IMR-90 (cell line): ENCODE measurements at regions of chr11 and their contacts with region 1.

Region 1: GRCh38 chr11:83071567-83072349 is at the start of gene RAB30:
- DNase-seq: peak; percentile 100
- ATAC-seq: peak; percentile 96
- H3K4me3 ChIP-seq: peak within 1 kb of the TSS; percentile 64
- H3K27ac ChIP-seq: peak within 1 kb of the TSS; percentile 93
- H3K4me1 ChIP-seq: peaks cover 7% of the 10 kb centered on the region
- H3K27me3 ChIP-seq: no peaks in the 10 kb centered on the region
- CTCF ChIP-seq: no peak
- POLR2A ChIP-seq: peak; percentile 95
- RAD21 ChIP-seq: peak; percentile 49
- total RNA-seq, gene RAB30: 14.4 and 25.6 TPM in 2 replicates

Region 2: DNA sequence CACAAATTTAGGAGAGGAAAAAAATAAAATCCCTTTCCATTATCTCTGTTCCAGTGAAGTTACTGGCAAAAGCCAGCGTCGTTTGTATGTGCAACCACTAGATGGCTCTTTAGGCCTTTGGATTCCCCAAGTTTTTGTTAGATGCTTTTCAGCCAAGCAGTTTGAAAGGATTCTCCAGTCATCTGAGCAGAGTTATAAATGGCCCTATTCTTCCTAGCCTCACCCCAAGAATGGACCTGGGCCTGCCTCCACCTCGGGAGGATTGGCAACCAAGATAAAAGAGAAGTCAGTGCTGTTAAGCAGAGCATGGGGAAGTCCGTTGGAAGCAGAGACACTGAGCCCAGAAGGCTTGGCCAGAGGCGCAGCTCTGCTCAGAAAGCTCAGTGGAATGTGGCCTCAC is 353.5 kb before region 1 on chr11:
- CTCF ChIA-PET with region 1: no interaction called
- POLR2A ChIA-PET with region 1: no interaction called
- dilution Hi-C with region 1: no loop called
- in situ Hi-C with region 1: no loop called
- intact Hi-C with region 1: loop called (anchors 10 kb)
- DNase-seq: peak; percentile 49
- ATAC-seq: peak; percentile 93
- H3K4me3 ChIP-seq: no peak overlapping the region
- H3K27ac ChIP-seq: no peak overlapping the region
- H3K4me1 ChIP-seq: no peaks in the 10 kb centered on the region
- H3K27me3 ChIP-seq: peaks cover 9% of the 10 kb centered on the region
- CTCF ChIP-seq: peak; percentile 72
- POLR2A ChIP-seq: no peak
- RAD21 ChIP-seq: peak; percentile 69

Region 3: DNA sequence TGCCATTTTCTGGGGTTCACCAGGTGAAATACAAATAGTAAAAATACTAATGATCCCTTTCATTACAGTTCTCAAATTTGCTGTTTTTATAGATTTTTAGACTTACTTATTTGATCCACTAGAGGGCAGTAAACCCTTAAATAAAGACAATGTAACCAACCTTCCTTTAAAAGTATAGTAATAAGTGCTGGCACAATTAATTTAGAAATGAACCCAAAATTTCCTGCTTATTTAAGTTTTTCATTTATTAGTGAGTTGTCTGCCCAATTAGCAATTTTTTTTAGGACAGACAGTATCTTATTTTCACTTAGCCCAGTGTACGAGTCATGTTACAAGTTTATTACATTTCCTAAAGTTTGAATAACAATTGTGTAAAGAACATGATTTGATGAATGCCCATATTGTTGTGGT is 165.5 kb before region 1 on chr11:
- CTCF ChIA-PET with region 1: interaction called, 3 read pairs
- POLR2A ChIA-PET with region 1: no interaction called
- dilution Hi-C with region 1: no loop called
- in situ Hi-C with region 1: loop called (anchors 10 kb)
- intact Hi-C with region 1: loop called (anchors 1 kb)
- DNase-seq: peak; percentile 43
- ATAC-seq: no peak
- H3K4me3 ChIP-seq: no peak overlapping the region
- H3K27ac ChIP-seq: no peak overlapping the region
- H3K4me1 ChIP-seq: no peaks in the 10 kb centered on the region
- H3K27me3 ChIP-seq: no peaks in the 10 kb centered on the region
- CTCF ChIP-seq: peak; percentile 59
- POLR2A ChIP-seq: no peak
- RAD21 ChIP-seq: peak; percentile 68

Region 4: DNA sequence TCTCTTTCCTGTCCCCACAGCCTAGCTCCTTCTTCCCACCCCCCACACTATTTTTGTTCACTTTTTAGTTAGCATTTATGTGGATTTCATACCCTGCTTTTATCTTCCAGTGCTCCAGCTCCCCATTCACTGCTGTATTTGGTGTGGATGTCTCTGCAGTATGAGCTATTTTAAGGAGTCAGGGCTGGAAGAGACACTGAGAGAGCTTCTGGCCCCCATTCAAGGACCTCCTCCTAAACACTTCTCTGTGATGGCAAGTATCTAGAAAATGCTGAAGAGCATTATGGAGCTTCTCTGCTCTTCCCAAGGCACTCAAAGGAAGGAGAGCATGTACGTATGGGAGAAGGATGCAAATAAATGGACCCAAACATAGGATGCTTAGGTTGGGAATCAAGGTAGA is 79.5 kb before region 1 on chr11:
- CTCF ChIA-PET with region 1: no interaction called
- POLR2A ChIA-PET with region 1: no interaction called
- dilution Hi-C with region 1: no loop called
- in situ Hi-C with region 1: no loop called
- intact Hi-C with region 1: no loop called
- DNase-seq: no peak
- ATAC-seq: peak; percentile 21; the same call in 1 of the 2 replicates
- H3K4me3 ChIP-seq: no peak overlapping the region
- H3K27ac ChIP-seq: no peak overlapping the region
- H3K4me1 ChIP-seq: peaks cover 2% of the 10 kb centered on the region
- H3K27me3 ChIP-seq: no peaks in the 10 kb centered on the region
- CTCF ChIP-seq: no peak
- POLR2A ChIP-seq: no peak
- RAD21 ChIP-seq: no peak

Region 5: GRCh38 chr11:83011333-83012167 is 60.2 kb before region 1 on chr11:
- CTCF ChIA-PET with region 1: no interaction called
- POLR2A ChIA-PET with region 1: no interaction called
- dilution Hi-C with region 1: no loop called
- in situ Hi-C with region 1: no loop called
- intact Hi-C with region 1: loop called (anchors 5 kb)
- DNase-seq: no peak
- ATAC-seq: no peak
- H3K4me3 ChIP-seq: no peak overlapping the region
- H3K27ac ChIP-seq: no peak overlapping the region
- H3K4me1 ChIP-seq: peaks cover 22% of the 10 kb centered on the region
- H3K27me3 ChIP-seq: no peaks in the 10 kb centered on the region
- CTCF ChIP-seq: no peak
- POLR2A ChIP-seq: no peak
- RAD21 ChIP-seq: no peak

Region 6: GRCh38 chr11:83156150-83156995 is 84.6 kb after region 1 on chr11:
- CTCF ChIA-PET with region 1: no interaction called
- POLR2A ChIA-PET with region 1: no interaction called
- dilution Hi-C with region 1: loop called (anchors 25 kb)
- in situ Hi-C with region 1: no loop called
- intact Hi-C with region 1: loop called (anchors 1 kb)
- DNase-seq: peak; percentile 100
- ATAC-seq: peak; percentile 92
- H3K4me3 ChIP-seq: peak overlapping the region; percentile 58
- H3K27ac ChIP-seq: peak overlapping the region; percentile 60
- H3K4me1 ChIP-seq: peaks cover 3% of the 10 kb centered on the region
- H3K27me3 ChIP-seq: no peaks in the 10 kb centered on the region
- CTCF ChIP-seq: no peak
- POLR2A ChIP-seq: no peak
- RAD21 ChIP-seq: no peak

Region 7: DNA sequence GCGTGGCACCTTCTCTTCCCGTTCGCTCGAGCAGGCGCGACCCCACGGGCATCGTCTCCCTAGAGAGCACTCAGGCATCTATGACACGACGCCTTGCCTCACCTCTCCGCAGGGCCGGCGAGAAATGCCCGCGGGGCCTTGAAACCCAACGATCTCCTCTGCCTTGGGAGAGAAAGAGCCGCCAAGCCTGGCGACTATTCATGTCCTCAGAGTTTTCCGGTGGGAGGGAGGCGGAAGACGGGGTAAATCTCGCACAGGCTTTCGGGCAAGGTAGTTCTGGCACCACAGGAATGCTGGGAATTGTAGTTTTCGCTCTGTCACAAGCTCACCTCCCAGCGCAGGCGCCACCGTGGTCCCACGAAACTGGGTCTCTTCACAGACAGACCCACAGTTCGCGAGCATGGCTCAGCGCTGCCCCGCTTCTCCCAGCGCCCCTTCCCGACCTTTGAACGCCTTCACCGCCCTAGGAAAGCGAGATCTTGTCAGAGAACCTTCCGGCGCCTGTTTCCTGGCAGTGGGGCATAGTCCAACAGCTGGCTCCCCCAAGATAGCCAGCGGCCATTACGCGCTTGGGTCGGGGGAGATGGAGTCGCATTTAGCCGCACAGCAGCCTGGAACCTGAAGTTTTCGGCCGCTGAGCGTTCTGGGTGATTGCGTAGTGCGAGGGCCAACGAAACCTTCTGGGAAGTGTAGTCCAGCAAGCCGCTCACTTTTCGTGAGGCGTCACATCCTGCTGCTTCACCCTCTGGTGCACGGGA is 214.2 kb after region 1 on chr11 and contains the start of gene CCDC90B:
- CTCF ChIA-PET with region 1: no interaction called
- POLR2A ChIA-PET with region 1: no interaction called
- dilution Hi-C with region 1: no loop called
- in situ Hi-C with region 1: no loop called
- intact Hi-C with region 1: loop called (anchors 5 kb)
- DNase-seq: peak; percentile 98
- ATAC-seq: peak; percentile 94
- H3K4me3 ChIP-seq: peak within 1 kb of the TSS; percentile 65
- H3K27ac ChIP-seq: peak within 1 kb of the TSS; percentile 92
- H3K4me1 ChIP-seq: peaks cover 2% of the 10 kb centered on the region
- H3K27me3 ChIP-seq: no peaks in the 10 kb centered on the region
- CTCF ChIP-seq: peak; percentile 54
- POLR2A ChIP-seq: peak; percentile 94
- RAD21 ChIP-seq: no peak
- total RNA-seq, gene CCDC90B: 43.7 and 63.0 TPM in 2 replicates